Caco-2 (cell line): ENCODE measurements at regions of chr2 and their contacts with region 1.

Region 1: DNA sequence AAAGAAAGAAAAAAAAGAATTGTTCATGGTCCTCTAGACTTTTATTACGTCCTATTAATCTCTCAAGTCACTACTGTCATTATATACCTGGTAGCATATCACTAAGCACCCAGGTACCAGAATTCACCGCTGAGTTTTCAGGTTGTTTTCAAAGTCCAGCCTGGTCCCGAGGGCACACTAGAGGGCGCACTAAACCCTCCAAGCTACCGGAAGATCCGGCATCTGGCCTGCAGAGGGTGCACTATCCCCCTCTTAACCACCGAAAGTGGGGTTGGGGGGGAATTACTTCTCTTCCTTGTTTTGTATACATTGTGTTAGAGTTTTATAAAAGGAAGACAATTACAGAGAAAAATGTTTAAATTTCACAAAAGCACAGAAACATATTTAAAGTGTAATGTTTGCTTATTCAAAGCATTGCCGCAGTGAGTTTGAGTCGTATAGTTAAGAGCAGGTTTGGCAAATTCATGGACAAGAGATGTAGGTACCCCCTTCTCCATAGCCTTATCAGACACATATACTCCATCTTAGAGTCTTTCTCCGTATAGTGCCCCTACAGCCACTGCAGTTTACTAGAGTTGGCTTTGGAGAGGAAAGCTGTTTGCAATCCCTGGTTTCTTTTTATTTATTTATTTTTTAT is 19.2 kb downstream of the MOGAT1 start:
- DNase-seq: peak; percentile 82 to 89
- H3K4me3 ChIP-seq: no peak overlapping the region
- H3K4me3 Mint-ChIP-seq: no peak overlapping the region
- H3K27ac Mint-ChIP-seq: no peak overlapping the region
- H3K4me1 ChIP-seq: no peaks in the 10 kb centered on the region
- H3K4me1 Mint-ChIP-seq: no peaks in the 10 kb centered on the region
- H3K27me3 ChIP-seq: no peaks in the 10 kb centered on the region
- H3K27me3 Mint-ChIP-seq: no peaks in the 10 kb centered on the region
- CTCF ChIP-seq: peak; percentile 100

Region 2: GRCh38 chr2:222627764-222628163 is 62.9 kb before region 1 on chr2:
- CTCF ChIA-PET with region 1: no interaction called
- POLR2A ChIA-PET with region 1: no interaction called
- intact Hi-C with region 1: no loop called
- DNase-seq: no peak
- H3K4me3 ChIP-seq: no peak overlapping the region
- H3K4me3 Mint-ChIP-seq: no peak overlapping the region
- H3K27ac Mint-ChIP-seq: no peak overlapping the region
- H3K4me1 ChIP-seq: no peaks in the 10 kb centered on the region
- H3K4me1 Mint-ChIP-seq: no peaks in the 10 kb centered on the region
- H3K27me3 ChIP-seq: no peaks in the 10 kb centered on the region
- H3K27me3 Mint-ChIP-seq: no peaks in the 10 kb centered on the region
- CTCF ChIP-seq: no peak

Region 3: GRCh38 chr2:222797261-222797660 is 106.6 kb after region 1 on chr2:
- CTCF ChIA-PET with region 1: no interaction called
- POLR2A ChIA-PET with region 1: no interaction called
- intact Hi-C with region 1: loop called (anchors 5 kb)
- DNase-seq: no peak
- H3K4me3 ChIP-seq: no peak overlapping the region
- H3K4me3 Mint-ChIP-seq: peak overlapping the region; percentile 39
- H3K27ac Mint-ChIP-seq: peak overlapping the region; percentile 20
- H3K4me1 ChIP-seq: peaks cover 64% of the 10 kb centered on the region
- H3K4me1 Mint-ChIP-seq: peaks cover 48% of the 10 kb centered on the region
- H3K27me3 ChIP-seq: no peaks in the 10 kb centered on the region
- H3K27me3 Mint-ChIP-seq: no peaks in the 10 kb centered on the region
- CTCF ChIP-seq: peak; percentile 33 to 43

Region 4: GRCh38 chr2:222903234-222904220 is 212.8 kb after region 1 on chr2:
- CTCF ChIA-PET with region 1: interaction called, 27 read pairs
- POLR2A ChIA-PET with region 1: no interaction called
- intact Hi-C with region 1: loop called (anchors 1 kb)
- DNase-seq: peak; percentile 67 to 75
- H3K4me3 ChIP-seq: no peak overlapping the region
- H3K4me3 Mint-ChIP-seq: no peak overlapping the region
- H3K27ac Mint-ChIP-seq: no peak overlapping the region
- H3K4me1 ChIP-seq: peaks cover 44% of the 10 kb centered on the region
- H3K4me1 Mint-ChIP-seq: peaks cover 72% of the 10 kb centered on the region
- H3K27me3 ChIP-seq: no peaks in the 10 kb centered on the region
- H3K27me3 Mint-ChIP-seq: no peaks in the 10 kb centered on the region
- CTCF ChIP-seq: peak; percentile 86 to 87

Region 5: DNA sequence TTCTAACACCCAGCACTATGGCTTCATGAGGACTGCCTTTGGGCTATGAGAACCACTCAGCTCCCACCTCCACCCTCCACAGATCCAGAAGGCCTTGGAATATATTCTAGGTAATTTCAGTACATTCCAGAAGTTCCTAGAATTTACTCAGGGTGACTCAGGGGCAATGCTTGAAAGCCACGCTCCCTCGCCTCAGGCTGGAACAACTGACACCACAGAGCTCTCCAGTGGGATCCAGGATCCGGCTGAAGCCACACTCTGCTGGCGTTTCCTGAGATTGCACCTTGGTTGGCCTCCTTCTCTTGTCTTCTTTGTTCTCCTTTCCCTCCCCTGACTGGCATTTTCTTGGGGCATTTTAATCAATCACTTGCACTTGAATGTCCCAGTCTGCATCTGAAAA is 268.7 kb after region 1 on chr2:
- CTCF ChIA-PET with region 1: interaction called, 5 read pairs
- POLR2A ChIA-PET with region 1: no interaction called
- intact Hi-C with region 1: loop called (anchors 1 kb)
- DNase-seq: peak; percentile 81 to 90
- H3K4me3 ChIP-seq: no peak overlapping the region
- H3K4me3 Mint-ChIP-seq: no peak overlapping the region
- H3K27ac Mint-ChIP-seq: peak overlapping the region; percentile 49
- H3K4me1 ChIP-seq: peaks cover 25% of the 10 kb centered on the region
- H3K4me1 Mint-ChIP-seq: peaks cover 20% of the 10 kb centered on the region
- H3K27me3 ChIP-seq: no peaks in the 10 kb centered on the region
- H3K27me3 Mint-ChIP-seq: no peaks in the 10 kb centered on the region
- CTCF ChIP-seq: peak; percentile 38 to 44

Region 6: GRCh38 chr2:223214394-223215253 is 523.9 kb after region 1 on chr2:
- CTCF ChIA-PET with region 1: no interaction called
- POLR2A ChIA-PET with region 1: no interaction called
- intact Hi-C with region 1: loop called (anchors 5 kb)
- DNase-seq: no peak
- H3K4me3 ChIP-seq: no peak overlapping the region
- H3K4me3 Mint-ChIP-seq: no peak overlapping the region
- H3K27ac Mint-ChIP-seq: no peak overlapping the region
- H3K4me1 ChIP-seq: no peaks in the 10 kb centered on the region
- H3K4me1 Mint-ChIP-seq: no peaks in the 10 kb centered on the region
- H3K27me3 ChIP-seq: no peaks in the 10 kb centered on the region
- H3K27me3 Mint-ChIP-seq: peaks cover 3% of the 10 kb centered on the region
- CTCF ChIP-seq: no peak